ENCODE measurements at regions of chr1 and their contacts with region 1.

Region 1: GRCh38 chr1:171485375-171486047 is at the start of gene PRRC2C:
- DNase-seq: peak; percentile 96
- H3K4me3 Mint-ChIP-seq: peak within 1 kb of the TSS; percentile 84
- H3K27ac Mint-ChIP-seq: peak within 1 kb of the TSS; percentile 94
- H3K4me1 Mint-ChIP-seq: peaks cover 39% of the 10 kb centered on the region
- H3K27me3 Mint-ChIP-seq: no peaks in the 10 kb centered on the region
- total RNA-seq, gene PRRC2C: 199 to 206 TPM

Region 2: DNA sequence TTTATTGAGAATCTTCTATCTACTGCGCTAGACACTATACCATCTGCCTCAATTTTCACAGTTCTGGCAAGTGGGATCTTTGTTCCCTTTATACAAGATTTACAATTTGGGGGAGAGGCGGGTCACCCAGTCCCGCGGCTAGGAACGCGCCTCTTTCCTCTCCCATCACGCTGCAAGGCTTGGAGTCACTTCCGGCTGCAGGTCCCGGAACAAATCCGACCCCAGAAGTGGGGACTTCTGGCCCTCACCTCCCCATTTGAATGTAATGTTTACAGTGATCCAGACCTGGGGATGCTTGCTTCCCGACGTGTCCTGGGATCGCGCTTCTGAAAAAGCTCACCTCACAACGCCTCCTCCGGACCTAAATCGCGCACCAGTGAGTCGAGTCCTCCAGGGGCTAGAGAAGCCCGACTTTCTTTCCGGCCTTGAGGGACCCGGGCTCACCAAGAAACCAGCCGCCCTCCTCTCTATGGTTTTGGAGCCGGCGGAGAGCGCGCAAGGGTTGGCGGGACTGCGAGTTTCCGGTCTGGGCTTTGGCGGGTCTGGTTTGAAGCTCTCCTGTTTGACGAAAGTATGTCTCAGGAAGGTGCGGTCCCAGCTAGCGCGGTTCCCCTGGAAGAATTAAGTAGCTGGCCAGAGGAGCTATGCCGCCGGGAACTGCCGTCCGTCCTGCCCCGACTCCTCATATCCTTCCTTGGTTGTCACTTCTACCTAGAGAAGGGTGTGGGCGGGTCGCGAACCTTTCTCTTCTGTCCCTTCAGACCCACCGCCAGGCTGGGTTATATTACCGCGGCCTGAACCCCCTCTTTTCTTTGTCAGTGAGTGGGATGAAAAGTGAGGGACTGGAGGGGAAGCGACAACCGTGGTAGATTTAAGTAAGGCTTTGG is 1690.7 kb before region 1 on chr1 and contains the start of gene METTL18:
- CTCF ChIA-PET with region 1: no interaction called
- intact Hi-C with region 1: loop called (anchors 1 kb)
- DNase-seq: peak; percentile 97
- H3K4me3 Mint-ChIP-seq: peak within 1 kb of the TSS; percentile 99
- H3K27ac Mint-ChIP-seq: peak within 1 kb of the TSS; percentile 99
- H3K4me1 Mint-ChIP-seq: peaks cover 48% of the 10 kb centered on the region
- H3K27me3 Mint-ChIP-seq: no peaks in the 10 kb centered on the region
- total RNA-seq, gene METTL18: 10.6 to 11.1 TPM

Region 3: DNA sequence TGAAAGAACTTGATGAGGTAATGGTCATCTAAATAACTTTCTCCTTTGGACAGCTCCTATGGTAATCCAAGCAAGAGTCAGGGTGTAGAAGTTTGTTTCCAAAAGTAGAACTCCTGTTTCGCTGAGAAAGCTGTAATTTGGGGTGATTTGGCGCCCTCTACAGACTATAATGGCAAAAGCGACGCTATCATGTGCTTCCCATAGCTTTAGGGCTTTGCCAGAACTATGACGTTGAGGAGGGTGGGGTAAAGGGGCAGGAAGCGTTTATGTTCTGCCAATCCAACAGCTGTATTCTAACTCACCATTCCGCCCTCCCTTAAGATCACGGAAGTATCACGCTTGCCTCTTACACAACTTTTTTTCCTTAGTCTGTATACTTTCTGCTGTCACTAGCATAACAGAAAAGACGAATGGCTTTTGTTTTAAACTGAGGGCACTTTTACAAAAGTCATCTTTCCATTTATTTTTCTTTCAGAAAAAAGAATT is 171.6 kb before region 1 on chr1 and contains the start of gene FMO4:
- CTCF ChIA-PET with region 1: interaction called, 5 read pairs
- intact Hi-C with region 1: loop called (anchors 1 kb)
- DNase-seq: peak; percentile 92
- H3K4me3 Mint-ChIP-seq: peak within 1 kb of the TSS; percentile 71
- H3K27ac Mint-ChIP-seq: peak within 1 kb of the TSS; percentile 69
- H3K4me1 Mint-ChIP-seq: peaks cover 14% of the 10 kb centered on the region
- H3K27me3 Mint-ChIP-seq: no peaks in the 10 kb centered on the region
- total RNA-seq, gene FMO4: 2.0 to 2.1 TPM

Region 4: DNA sequence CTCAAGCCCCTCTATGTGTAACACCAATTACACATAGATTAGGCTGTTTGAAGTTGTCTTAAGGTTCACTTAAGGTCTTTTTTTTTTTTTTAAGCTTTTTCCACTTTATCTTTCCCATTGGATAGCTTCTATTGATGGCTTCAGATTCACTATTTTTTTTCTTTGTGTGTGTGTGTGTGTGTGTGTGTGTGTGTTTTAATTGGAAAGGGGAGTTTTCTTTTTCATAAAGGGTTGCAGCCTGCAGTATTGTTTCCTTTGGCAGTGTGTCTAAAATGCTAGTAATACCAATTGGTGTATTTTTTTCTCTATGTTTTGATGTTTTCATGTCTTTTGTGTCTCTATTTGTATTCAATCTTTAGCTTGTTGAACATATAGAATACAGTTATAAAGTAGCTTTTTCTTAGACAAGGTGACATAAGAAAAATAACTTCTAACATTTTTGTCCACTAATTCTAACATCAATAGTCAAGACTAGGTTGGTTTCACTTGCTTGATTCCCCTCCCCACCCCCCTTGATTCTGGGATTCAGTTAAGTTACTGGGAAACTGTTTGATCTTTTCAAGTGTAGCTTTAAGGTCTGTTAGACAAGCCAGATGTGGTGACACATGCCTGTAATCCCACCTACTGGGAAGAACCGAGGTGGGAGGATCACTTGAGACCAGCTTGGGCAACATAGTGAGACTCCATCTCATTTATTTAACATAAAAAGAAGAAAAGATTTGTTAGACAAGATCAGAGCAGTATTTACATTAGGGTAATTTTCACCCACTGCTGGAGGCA is 21.2 kb after region 1 on chr1:
- CTCF ChIA-PET with region 1: interaction called, 10 read pairs
- intact Hi-C with region 1: loop called (anchors 1 kb)
- DNase-seq: no peak
- H3K4me3 Mint-ChIP-seq: no peak overlapping the region
- H3K27ac Mint-ChIP-seq: peak overlapping the region; percentile 58
- H3K4me1 Mint-ChIP-seq: peaks cover 94% of the 10 kb centered on the region
- H3K27me3 Mint-ChIP-seq: no peaks in the 10 kb centered on the region

Region 5: DNA sequence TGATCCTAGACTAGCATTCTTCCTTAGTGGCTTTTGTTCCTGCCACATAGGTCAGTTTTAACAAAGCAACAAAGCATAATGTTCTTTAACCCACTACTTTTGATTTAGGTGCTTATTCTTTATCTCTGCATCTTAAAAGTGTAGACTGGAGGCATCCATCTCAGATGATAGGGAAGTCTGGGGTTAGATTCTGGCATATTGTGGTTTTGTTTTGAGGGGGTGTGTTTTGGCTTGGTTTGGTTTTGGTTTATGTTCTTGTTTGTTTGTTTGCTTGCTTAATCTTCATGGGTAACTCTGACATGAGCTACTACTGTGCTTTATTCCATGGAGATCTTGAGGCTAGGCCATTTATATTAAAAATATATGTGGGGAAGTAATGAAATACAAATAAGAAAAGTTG is 96.3 kb after region 1 on chr1:
- CTCF ChIA-PET with region 1: no interaction called
- intact Hi-C with region 1: loop called (anchors 2 kb)
- DNase-seq: no peak
- H3K4me3 Mint-ChIP-seq: no peak overlapping the region
- H3K27ac Mint-ChIP-seq: peak overlapping the region; percentile 43
- H3K4me1 Mint-ChIP-seq: peaks cover 19% of the 10 kb centered on the region
- H3K27me3 Mint-ChIP-seq: no peaks in the 10 kb centered on the region

Region 6: DNA sequence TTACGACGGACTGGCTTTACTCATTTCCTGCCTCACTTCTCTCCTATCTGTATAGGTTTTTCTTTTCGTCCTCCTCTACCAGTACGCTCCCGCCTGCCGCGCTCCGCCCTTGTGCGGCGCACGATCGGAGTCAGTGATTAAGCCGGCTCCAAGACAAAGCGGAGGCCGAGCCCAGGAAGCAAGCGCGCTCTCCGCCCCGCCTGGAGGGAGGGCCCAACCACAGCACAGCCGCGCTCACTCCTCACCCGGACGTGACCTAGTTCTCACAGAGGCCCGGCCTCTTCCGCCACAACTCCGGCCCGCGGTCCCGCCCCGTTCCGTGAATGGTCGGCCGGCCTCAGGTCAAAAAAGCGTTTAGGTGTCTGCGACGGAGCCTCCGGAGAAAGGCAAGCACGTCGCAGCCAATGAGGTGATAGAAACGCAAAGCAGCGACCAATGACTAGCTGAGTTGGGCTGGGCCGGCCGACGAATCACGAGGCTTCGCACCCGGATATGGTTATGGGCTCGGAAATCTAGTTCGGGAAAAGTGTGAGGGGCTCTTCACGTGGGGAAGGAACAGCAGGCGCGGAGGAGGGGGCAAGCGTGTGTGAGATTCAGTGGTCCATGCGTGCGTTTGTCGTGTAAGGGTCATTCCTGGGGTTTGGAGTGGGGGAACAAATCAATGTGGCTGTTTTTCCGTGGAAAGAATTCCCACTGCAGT is 295.8 kb after region 1 on chr1 and contains the start of gene METTL13:
- CTCF ChIA-PET with region 1: interaction called, 3 read pairs
- intact Hi-C with region 1: loop called (anchors 1 kb)
- DNase-seq: peak; percentile 99
- H3K4me3 Mint-ChIP-seq: peak within 1 kb of the TSS; percentile 100
- H3K27ac Mint-ChIP-seq: peak within 1 kb of the TSS; percentile 98
- H3K4me1 Mint-ChIP-seq: peaks cover 49% of the 10 kb centered on the region
- H3K27me3 Mint-ChIP-seq: no peaks in the 10 kb centered on the region
- total RNA-seq, gene METTL13: 39.5 to 40.9 TPM

Region 7: GRCh38 chr1:172532700-172533509 is 1047.4 kb after region 1 on chr1 and contains the start of gene SUCO:
- CTCF ChIA-PET with region 1: no interaction called
- intact Hi-C with region 1: loop called (anchors 5 kb)
- DNase-seq: peak; percentile 100
- H3K4me3 Mint-ChIP-seq: peak within 1 kb of the TSS; percentile 94
- H3K27ac Mint-ChIP-seq: peak within 1 kb of the TSS; percentile 100
- H3K4me1 Mint-ChIP-seq: peaks cover 39% of the 10 kb centered on the region
- H3K27me3 Mint-ChIP-seq: no peaks in the 10 kb centered on the region
- total RNA-seq, gene SUCO: 23.9 TPM

Measured in activated naive CD4-positive, alpha-beta T cell treated with anti-CD3 and anti-CD28 coated beads for 36 hours (primary cell).